Activated naive CD4-positive, alpha-beta T cell treated with anti-CD3 and anti-CD28 coated beads for 36 hours (primary cell): ENCODE measurements at regions of chr13 and their contacts with region 1.

Region 1: DNA sequence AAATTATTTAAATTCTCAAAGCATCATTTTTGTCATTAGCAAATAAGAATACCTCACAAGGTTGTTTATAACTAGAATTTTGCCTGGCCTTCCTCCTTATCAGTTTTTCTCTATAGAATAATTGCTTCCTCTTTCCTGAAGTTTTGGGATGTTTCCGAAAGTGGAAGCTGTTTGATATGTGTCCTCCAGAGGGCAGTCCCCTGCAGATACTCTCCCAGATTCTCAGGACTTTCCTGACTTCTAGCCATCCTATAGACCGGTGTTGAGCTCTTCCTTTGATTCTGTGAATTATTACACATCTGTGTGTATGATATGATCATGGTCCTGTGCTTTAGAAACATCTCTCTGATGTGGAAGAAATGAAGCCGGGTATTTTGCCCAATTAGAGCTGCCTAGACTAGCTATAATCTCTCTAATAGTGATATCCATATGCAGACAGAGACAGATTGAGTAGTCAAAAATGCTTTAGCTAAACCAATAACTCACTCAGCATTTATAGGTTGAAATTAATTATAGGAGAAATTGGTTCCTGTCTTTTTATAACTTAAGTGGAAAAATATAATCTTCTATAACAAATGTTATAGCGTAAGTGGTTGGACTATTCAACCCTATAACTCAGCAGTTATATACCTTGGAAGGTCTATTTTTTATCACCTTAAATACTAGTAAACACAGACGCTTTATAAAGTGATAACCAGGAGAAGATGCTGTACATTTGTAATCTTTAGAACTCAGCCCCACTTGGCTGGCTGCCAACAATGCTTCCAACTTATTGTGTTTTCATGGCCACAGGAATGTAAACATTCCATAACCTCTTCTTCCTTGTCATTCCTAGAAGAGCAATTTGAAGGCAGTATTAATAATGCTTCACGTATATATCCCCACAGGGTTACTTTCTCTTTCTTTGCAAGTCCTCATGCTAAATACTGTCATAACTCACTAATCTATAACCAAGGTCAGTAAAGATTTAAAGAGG is 201.0 kb upstream of the RXFP2 start:
- DNase-seq: no peak
- H3K4me3 Mint-ChIP-seq: no peak overlapping the region
- H3K27ac Mint-ChIP-seq: no peak overlapping the region
- H3K4me1 Mint-ChIP-seq: no peaks in the 10 kb centered on the region
- H3K27me3 Mint-ChIP-seq: peaks cover 11% of the 10 kb centered on the region

Region 2: GRCh38 chr13:31301119-31301518 is 237.2 kb before region 1 on chr13:
- CTCF ChIA-PET with region 1: no interaction called
- intact Hi-C with region 1: no loop called
- DNase-seq: no peak
- H3K4me3 Mint-ChIP-seq: no peak overlapping the region
- H3K27ac Mint-ChIP-seq: no peak overlapping the region
- H3K4me1 Mint-ChIP-seq: no peaks in the 10 kb centered on the region
- H3K27me3 Mint-ChIP-seq: no peaks in the 10 kb centered on the region

Region 3: DNA sequence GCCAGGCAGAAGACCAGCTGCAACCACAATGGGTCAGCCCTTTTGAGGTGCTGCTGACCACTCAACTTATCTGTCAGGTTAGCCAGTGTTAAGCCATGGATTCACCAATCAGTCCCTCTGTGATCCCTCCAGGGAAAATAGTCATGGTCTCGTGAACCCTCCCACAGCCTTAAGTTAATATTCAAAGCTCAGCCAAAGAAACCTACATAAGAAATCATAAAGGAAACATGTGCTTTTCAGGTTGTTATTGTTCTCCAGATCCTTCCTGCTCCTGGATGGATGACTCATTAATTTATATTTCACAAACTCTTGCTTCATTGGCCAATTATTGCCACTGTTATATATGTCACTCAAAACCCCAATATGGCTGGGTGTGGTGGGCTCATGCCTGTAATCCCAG is 176.7 kb before region 1 on chr13:
- CTCF ChIA-PET with region 1: no interaction called
- intact Hi-C with region 1: no loop called
- DNase-seq: no peak
- H3K4me3 Mint-ChIP-seq: no peak overlapping the region
- H3K27ac Mint-ChIP-seq: no peak overlapping the region
- H3K4me1 Mint-ChIP-seq: no peaks in the 10 kb centered on the region
- H3K27me3 Mint-ChIP-seq: peaks cover 2% of the 10 kb centered on the region

Region 4: GRCh38 chr13:31556376-31556775 is 18.0 kb after region 1 on chr13:
- CTCF ChIA-PET with region 1: no interaction called
- intact Hi-C with region 1: no loop called
- DNase-seq: no peak
- H3K4me3 Mint-ChIP-seq: no peak overlapping the region
- H3K27ac Mint-ChIP-seq: no peak overlapping the region
- H3K4me1 Mint-ChIP-seq: no peaks in the 10 kb centered on the region
- H3K27me3 Mint-ChIP-seq: no peaks in the 10 kb centered on the region

Region 5: GRCh38 chr13:31638577-31638976 is 100.2 kb after region 1 on chr13:
- CTCF ChIA-PET with region 1: no interaction called
- intact Hi-C with region 1: no loop called
- DNase-seq: no peak
- H3K4me3 Mint-ChIP-seq: no peak overlapping the region
- H3K27ac Mint-ChIP-seq: no peak overlapping the region
- H3K4me1 Mint-ChIP-seq: no peaks in the 10 kb centered on the region
- H3K27me3 Mint-ChIP-seq: no peaks in the 10 kb centered on the region

Region 6: DNA sequence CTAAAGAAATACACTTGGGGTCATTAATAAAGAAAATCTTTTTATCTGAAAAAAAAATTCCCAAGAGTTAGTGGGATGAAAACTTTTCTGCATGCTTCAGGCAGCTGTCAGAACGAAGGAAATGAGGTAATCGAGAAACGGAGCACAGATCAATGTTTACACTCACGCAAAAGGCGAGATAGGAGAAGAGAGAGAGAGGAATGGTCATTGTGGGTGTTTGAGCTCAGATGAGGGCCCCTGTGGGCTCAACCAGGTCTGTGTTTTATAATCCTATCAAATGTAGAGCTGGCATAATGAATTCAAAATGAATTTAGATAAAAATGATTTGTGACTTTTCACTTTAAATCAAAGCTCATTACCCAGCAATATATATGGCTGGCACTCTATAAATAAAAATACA is 194.7 kb after region 1 on chr13:
- CTCF ChIA-PET with region 1: no interaction called
- intact Hi-C with region 1: loop called (anchors 10 kb)
- DNase-seq: no peak
- H3K4me3 Mint-ChIP-seq: no peak overlapping the region
- H3K27ac Mint-ChIP-seq: no peak overlapping the region
- H3K4me1 Mint-ChIP-seq: no peaks in the 10 kb centered on the region
- H3K27me3 Mint-ChIP-seq: peaks cover 7% of the 10 kb centered on the region